ENCODE measurements at regions of chr4 and their contacts with region 1.

Region 1: DNA sequence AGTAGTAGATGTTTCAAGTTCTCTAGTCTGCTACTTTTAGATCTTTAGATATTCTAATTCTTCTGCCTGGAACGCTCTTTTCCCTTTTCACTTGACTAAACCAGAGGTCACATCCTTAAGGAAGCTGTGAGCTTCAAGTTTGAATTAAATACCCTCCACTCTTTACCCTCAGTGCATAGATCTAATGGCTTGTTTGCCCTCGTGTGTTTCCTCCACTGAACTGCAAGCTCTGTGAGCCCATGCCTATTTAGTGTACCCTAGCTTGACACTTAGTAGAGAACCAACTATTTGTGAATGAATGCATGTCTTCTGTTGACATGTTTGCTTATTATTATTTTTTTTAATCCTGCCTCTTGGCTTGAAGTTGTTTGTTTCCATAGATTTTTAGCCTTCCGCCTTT is 138.3 kb downstream of the PDE5A start:
- ATAC-seq: peak in 2 of 8 experiments; percentile 39 to 41
- H3K4me3 ChIP-seq: no peak overlapping the region
- H3K27ac ChIP-seq: no peak overlapping the region
- H3K4me1 ChIP-seq: no peaks in the 10 kb centered on the region

Region 2: GRCh38 chr4:118981839-118982381 is 508.4 kb before region 1 on chr4:
- in situ Hi-C with region 1: loop called in 1 of 9 experiments (anchors 25 kb)
- ATAC-seq: peak; percentile 62 to 95 (median 78)
- H3K4me3 ChIP-seq: no peak overlapping the region
- H3K27ac ChIP-seq: no peak overlapping the region
- H3K4me1 ChIP-seq: no peaks in the 10 kb centered on the region

Region 3: GRCh38 chr4:119172223-119172622 is 318.1 kb before region 1 on chr4:
- in situ Hi-C with region 1: no loop called
- ATAC-seq: no peak
- H3K4me3 ChIP-seq: no peak overlapping the region
- H3K27ac ChIP-seq: no peak overlapping the region
- H3K4me1 ChIP-seq: no peaks in the 10 kb centered on the region

Region 4: DNA sequence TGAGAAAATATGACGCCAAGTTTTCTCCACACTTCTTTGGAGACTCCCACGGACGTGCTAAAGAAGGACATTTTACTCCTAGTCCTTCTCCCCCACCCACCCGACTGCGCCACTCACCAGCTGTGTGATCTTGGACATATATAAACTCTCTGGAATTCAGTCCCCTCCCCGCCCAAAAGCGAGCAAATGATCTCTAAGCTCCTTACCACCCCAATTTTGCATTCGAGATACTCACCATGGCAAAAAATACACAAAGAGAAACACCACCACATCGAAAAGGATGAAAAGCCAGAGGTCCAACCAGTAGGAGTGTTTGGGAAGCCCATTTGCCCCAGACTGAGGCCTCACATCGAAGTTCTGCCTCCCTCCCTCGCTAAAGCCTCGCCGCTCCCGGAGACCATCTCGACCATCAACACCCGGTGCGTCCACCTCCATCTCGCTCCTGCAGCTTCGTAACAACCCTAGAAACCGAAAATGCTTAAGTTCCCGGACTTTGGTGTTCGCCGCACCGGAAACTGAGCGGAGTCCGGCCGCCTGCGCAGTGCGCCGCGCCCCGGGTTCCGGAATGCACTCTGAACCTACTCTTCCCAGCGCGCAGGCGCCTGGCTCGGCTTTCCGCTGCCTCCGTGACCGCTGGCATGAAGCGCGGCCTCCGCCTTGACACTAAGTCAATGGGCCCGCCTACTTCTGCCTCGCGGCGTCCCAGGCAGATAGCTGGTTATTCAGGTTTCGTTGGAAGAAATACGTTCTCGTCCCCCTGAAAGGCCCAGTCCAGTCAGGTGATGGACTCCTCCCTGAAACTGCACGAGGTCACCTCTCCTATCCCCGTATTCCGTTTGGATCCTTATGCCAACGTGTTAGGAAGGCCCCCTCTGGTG is 190.0 kb before region 1 on chr4:
- in situ Hi-C with region 1: loop called in 1 of 9 experiments (anchors 25 kb)
- ATAC-seq: peak; percentile 88 to 99 (median 98)
- H3K4me3 ChIP-seq: peak overlapping the region; percentile 53 to 64 (median 57)
- H3K27ac ChIP-seq: peak overlapping the region; percentile 40 to 54
- H3K4me1 ChIP-seq: peaks cover 9 to 12% of the 10 kb centered on the region in 2 donors

Measured in motor neuron (in vitro differentiated cells).